Cardiac septum (tissue), 1 donor: ENCODE measurements at regions of chr9 and their contacts with region 1.

Region 1: DNA sequence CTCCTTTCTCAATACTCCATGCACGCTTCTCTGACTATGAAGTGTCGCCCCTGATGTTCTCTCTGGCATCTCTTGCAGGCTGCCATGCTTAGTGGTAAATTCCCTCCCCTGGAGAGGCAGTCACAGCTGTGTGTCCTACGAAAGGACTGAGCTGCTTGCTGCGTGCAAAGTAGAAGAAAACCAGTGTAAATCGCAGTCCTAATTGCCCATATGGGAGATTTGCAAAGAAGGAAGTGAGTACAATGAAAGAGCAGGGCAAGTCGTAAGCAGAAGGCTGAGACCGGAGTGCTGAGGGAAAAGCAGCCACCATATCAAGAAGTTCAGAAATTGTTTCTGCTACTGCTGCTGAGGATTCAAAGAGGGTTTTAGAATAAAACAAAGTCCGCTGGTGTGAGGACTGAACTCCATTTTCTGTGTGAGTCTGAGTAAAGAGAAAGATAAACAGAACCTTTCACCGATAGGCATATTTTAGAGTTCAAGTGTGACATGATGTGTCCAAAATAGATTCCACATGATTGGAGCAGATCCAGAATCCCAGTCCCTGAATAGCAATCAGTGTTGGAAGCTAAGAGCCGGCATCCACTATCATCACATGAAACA is 507.8 kb upstream of the MPDZ start:
- DNase-seq: no peak

Region 2: GRCh38 chr9:13734601-13735000 is 52.7 kb before region 1 on chr9:
- intact Hi-C with region 1: loop called (anchors 10 kb)
- DNase-seq: no peak

Region 3: DNA sequence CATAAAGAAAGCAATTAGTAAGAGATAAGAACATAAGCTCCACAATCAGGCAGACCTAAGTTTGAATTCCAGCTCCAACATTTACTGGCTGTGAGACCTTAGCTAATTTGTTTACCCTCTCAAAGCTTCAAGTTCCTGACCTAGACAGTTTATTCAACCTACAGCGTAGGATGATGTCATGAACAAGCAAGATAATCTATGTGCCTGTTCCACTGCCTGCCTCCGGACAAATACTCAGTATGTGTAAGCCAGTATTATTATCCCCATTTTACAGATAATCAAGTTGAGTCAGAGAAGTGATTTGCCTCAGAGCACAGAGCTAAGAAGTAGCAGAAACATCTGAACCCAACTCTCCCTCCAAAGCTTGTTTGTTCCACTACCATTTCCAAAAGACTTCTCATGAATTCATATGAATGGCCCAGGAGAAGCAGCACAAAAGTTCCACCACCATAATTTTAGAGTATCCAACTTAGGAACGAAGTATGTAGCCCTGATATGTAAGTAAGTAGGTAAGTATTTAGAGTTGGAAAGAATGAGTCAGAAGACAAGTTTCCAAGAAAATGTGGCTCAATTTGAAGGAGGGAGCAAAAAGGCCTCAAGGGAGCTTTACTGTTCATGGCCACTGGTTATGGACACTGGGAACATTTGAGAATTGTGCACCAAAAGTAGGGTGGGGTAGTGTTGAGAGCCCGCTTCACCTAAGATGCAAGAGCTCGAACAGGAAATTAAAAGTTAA is 128.4 kb after region 1 on chr9:
- intact Hi-C with region 1: loop called (anchors 10 kb)
- DNase-seq: no peak

Region 4: DNA sequence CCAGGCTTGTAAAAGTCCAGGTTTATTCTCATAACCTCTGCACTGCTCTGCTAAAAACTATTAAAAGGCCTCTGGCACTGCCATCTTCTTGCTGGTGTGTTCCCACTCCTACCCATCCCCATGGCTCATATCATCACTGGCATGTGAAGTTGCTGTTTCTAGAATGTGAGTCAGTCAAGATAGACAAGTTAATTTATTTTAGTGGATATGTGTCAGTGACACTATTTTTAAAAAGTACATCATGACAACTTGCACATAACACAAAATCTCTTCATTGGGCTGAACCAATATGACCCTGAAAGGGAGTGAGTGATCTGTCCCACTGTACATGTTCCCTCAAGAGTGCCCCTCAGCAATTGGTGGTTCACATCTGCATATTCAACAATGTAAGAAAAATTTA is 226.9 kb after region 1 on chr9:
- intact Hi-C with region 1: loop called (anchors 5 kb)
- DNase-seq: no peak

Region 5: DNA sequence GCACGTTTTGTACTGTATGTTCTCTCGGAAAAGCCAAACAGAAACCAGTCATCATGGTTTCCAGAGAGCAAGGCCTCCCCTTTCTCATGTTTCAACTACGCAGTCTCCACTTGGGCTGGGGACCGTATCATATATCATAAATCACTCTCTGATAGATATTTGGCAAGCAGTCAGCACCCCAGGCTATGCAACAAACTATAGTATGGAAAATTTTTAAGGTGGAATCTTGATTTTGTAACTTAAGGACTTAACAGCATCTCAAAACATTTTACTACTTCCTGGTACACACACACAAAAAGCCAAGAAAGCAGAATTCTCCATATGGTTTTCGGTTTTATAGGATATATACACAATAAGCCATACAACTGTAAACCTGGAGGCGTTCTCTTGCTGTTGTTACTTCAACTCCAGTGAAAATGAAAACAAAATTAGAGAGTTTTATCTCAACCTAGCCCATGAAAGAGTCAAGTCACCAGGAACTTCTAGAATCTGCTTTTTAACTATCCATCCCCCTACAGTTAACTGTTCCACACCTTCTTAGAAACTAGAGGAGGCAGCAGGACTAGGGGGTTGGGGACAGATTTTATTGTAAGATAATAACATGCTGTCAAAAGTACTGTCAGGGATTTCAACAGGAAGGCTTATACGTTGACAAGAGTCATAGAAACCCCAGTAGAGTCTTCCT is 243.2 kb after region 1 on chr9:
- intact Hi-C with region 1: loop called (anchors 5 kb)
- DNase-seq: no peak